SK-MEL-5 (cell line): ENCODE measurements at regions of chr11 and their contacts with region 1.

Region 1: DNA sequence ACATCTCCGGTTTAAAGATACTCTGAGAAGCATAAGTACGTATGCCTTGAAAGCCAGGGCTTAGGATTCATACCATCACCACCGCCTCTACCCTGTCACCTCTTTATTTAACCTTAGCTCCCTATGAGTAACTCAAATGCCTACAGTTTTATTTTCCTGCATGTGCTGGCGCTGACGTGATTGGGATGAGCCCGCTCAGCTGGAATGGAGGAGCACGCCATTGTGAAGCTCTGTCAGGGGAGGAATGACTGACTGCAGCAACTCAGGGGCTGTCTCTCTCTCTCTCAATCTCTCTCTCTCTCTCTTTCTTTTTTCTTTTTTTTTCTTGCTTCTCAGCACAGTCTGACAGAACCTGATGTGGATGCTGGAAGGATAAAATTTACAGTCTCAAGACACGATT is 12.4 kb downstream of the CAVIN3 start:
- DNase-seq: no peak

Region 2: DNA sequence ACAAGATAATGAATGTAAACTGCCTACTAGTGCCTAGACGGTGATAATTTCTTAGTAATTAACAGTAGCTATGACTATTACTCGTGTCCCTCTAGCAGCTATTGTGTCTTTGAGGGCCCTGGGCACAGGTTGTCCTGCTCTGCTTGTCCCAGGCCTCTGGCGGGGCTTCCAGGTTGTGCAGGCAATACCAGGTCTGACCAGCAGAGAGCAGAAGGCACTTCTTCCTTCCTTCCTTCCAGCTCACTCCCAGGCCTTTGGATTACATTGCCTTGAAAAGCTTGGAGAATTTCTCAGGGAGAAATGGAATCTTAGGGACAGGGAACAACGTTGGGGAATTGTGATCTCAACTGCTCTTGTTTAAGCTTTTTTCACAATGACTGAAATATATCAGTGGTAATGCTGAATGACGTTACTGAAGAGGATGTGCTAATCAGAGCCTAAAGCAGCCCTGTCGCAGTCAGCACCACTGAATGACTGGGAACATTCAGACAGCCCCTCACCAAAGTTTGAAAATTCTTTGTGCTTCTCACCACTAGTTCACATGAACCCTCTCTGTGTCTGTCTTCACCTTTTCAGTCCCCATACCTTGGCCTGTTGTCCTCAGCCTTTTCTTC is 56.6 kb before region 1 on chr11:
- in situ Hi-C with region 1: loop called (anchors 10 kb)
- DNase-seq: peak; percentile 74

Region 3: GRCh38 chr11:6682936-6683861 is 375.3 kb after region 1 on chr11 and contains the start of gene MRPL17:
- in situ Hi-C with region 1: no loop called
- DNase-seq: peak; percentile 99
- total RNA-seq, gene MRPL17: 58.3 and 62.6 TPM in 2 replicates